Transverse colon (tissue), 4 donors: ENCODE measurements at regions of chr14 and their contacts with region 1.

Region 1: DNA sequence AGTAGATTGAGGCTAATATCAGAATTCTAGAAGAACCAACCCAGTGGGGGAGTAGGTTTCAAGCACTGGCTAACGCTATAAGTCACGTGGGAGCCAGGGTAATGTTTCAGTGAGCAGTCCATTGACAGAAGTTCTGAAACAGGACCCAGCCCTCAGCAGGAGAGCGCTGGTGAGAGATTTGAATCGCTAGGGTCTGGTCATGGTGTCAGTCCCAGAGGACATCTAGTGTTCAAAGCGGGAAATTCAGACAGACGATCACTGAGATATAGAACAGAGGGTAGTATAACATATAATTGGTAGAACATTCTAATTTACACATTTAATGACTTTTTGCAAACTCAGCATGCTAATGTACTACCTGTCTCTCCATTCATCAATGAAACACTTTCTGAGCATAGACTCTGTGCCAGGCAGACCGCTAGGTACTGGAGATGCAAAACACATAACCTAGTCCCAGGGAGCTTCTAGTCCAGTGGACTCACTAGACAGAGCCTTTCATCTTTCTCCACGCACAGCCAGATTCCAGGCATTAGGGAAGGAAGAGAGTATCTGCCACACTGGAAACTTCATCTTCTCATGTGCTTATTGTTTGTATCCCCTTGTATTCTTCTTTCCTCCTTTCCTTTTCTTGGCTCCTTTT is 35.4 kb upstream of the RNASE3 start:
- DNase-seq: peak; percentile 57
- H3K4me3 ChIP-seq: no peak overlapping the region
- H3K27ac ChIP-seq: no peak overlapping the region
- H3K4me1 ChIP-seq: peaks cover 0 to 8% (median 0%) of the 10 kb centered on the region in 4 donors
- H3K27me3 ChIP-seq: no peaks in the 10 kb centered on the region
- CTCF ChIP-seq: peak; percentile 59 to 86 (median 62)
- EP300 ChIP-seq: no peak
- POLR2A ChIP-seq: no peak

Region 2: DNA sequence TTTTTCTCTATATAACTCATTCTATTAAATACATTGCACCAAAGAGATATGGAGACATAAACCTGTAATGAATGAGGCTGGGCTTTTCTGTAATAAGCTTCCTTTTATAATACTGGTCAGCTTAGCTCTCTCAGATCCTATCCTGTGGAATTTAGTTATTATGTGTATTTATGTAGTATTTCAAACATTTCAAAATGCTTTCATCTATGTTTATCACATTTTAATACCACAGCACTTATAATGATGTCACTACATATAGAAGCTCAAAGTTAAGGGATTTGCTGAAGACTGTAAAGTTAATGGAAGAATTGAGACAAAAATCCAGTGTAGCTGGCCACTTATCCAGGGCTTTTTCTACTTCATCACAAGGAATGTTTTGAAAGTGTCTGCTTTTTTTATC is 155.8 kb before region 1 on chr14:
- in situ Hi-C with region 1: loop called (anchors 5 to 10 kb)
- intact Hi-C with region 1: loop called (anchors 10 kb)
- DNase-seq: no peak
- H3K4me3 ChIP-seq: no peak overlapping the region
- H3K27ac ChIP-seq: no peak overlapping the region
- H3K4me1 ChIP-seq: no peaks in the 10 kb centered on the region
- H3K27me3 ChIP-seq: no peaks in the 10 kb centered on the region
- CTCF ChIP-seq: no peak
- EP300 ChIP-seq: no peak
- POLR2A ChIP-seq: no peak

Region 3: GRCh38 chr14:20956376-20956976 is 100.7 kb after region 1 on chr14:
- in situ Hi-C with region 1: loop called in 3 of 4 experiments (anchors 5 to 10 kb)
- intact Hi-C with region 1: no loop called
- DNase-seq: no peak
- H3K4me3 ChIP-seq: no peak overlapping the region
- H3K27ac ChIP-seq: no peak overlapping the region
- H3K4me1 ChIP-seq: peaks cover 0 to 6% (median 0%) of the 10 kb centered on the region in 4 donors
- H3K27me3 ChIP-seq: no peaks in the 10 kb centered on the region
- CTCF ChIP-seq: no peak
- EP300 ChIP-seq: no peak
- POLR2A ChIP-seq: no peak

Region 4: GRCh38 chr14:20970983-20971704 is 115.4 kb after region 1 on chr14:
- in situ Hi-C with region 1: loop called in 2 of 4 experiments (anchors 10 kb)
- intact Hi-C with region 1: no loop called
- DNase-seq: peak; percentile 82
- H3K4me3 ChIP-seq: peak overlapping the region; percentile 33 to 55 (median 38)
- H3K27ac ChIP-seq: peak overlapping the region; percentile 62 to 86 (median 72)
- H3K4me1 ChIP-seq: peaks cover 0 to 5% (median 0%) of the 10 kb centered on the region in 4 donors
- H3K27me3 ChIP-seq: no peaks in the 10 kb centered on the region
- CTCF ChIP-seq: peak; percentile 73 to 89 (median 79)
- EP300 ChIP-seq: no peak
- POLR2A ChIP-seq: no peak

Region 5: DNA sequence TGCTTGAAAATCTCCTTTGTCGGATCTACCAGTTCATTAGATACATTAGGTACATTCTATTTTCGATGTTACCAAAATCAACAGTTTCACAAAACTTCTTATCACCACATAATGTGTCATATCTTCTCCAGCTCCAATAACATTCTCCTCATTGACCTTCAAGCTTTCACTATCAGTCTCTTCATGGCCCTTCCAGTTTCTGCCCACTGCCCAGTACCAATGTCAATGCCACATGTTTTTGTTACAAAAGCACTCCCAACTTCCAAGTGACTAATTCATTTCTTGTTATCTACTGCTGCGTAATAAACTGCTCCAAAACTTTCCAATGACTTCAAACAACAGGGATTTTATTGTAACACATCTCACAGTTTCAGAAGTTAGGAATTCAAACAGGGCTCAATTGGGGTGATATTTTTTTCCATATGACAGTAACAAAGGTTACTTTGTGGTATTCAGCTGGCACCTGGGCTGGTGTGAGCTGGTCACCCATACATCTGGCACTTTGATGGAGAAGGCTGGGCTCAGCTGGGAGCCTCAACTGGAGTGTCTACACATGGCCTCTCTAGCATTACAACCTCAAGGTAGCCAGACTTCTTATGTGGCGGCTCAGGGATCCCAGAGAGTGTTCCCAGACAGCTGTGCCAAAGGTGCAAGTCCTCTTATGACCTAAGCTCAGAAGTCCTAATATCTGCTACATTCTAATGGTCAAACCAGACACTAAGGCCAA is 294.0 kb after region 1 on chr14:
- in situ Hi-C with region 1: no loop called
- intact Hi-C with region 1: no loop called
- DNase-seq: no peak
- H3K4me3 ChIP-seq: no peak overlapping the region
- H3K27ac ChIP-seq: no peak overlapping the region
- H3K4me1 ChIP-seq: no peaks in the 10 kb centered on the region
- H3K27me3 ChIP-seq: peaks cover under 1% of the 10 kb centered on the region
- CTCF ChIP-seq: no peak
- EP300 ChIP-seq: no peak
- POLR2A ChIP-seq: no peak